ENCODE measurements at regions of chr11 and their contacts with region 1.

Region 1: GRCh38 chr11:43643898-43644620 is 36.5 kb upstream of the HSD17B12 start:
- DNase-seq: peak; percentile 93
- H3K4me3 Mint-ChIP-seq: peak overlapping the region; percentile 98
- H3K27ac Mint-ChIP-seq: peak overlapping the region; percentile 92
- H3K4me1 Mint-ChIP-seq: peaks cover 23% of the 10 kb centered on the region
- H3K27me3 Mint-ChIP-seq: peaks cover 12% of the 10 kb centered on the region

Region 2: GRCh38 chr11:43358801-43359421 is 285.1 kb before region 1 on chr11 and contains the start of gene TTC17:
- CTCF ChIA-PET with region 1: no interaction called
- intact Hi-C with region 1: loop called (anchors 1 kb)
- DNase-seq: peak; percentile 96
- H3K4me3 Mint-ChIP-seq: peak within 1 kb of the TSS; percentile 95
- H3K27ac Mint-ChIP-seq: peak within 1 kb of the TSS; percentile 94
- H3K4me1 Mint-ChIP-seq: peaks cover 37% of the 10 kb centered on the region
- H3K27me3 Mint-ChIP-seq: no peaks in the 10 kb centered on the region
- total RNA-seq, gene TTC17: 57.1 to 64.3 TPM

Region 3: GRCh38 chr11:43486141-43486540 is 157.9 kb before region 1 on chr11:
- CTCF ChIA-PET with region 1: no interaction called
- intact Hi-C with region 1: no loop called
- DNase-seq: no peak
- H3K4me3 Mint-ChIP-seq: no peak overlapping the region
- H3K27ac Mint-ChIP-seq: no peak overlapping the region
- H3K4me1 Mint-ChIP-seq: no peaks in the 10 kb centered on the region
- H3K27me3 Mint-ChIP-seq: no peaks in the 10 kb centered on the region

Region 4: GRCh38 chr11:43579171-43579918 is 64.7 kb before region 1 on chr11:
- CTCF ChIA-PET with region 1: no interaction called
- intact Hi-C with region 1: loop called (anchors 2 kb)
- DNase-seq: peak; percentile 58
- H3K4me3 Mint-ChIP-seq: peak overlapping the region; percentile 72
- H3K27ac Mint-ChIP-seq: no peak overlapping the region
- H3K4me1 Mint-ChIP-seq: peaks cover 54% of the 10 kb centered on the region
- H3K27me3 Mint-ChIP-seq: peaks cover 93% of the 10 kb centered on the region

Region 5: DNA sequence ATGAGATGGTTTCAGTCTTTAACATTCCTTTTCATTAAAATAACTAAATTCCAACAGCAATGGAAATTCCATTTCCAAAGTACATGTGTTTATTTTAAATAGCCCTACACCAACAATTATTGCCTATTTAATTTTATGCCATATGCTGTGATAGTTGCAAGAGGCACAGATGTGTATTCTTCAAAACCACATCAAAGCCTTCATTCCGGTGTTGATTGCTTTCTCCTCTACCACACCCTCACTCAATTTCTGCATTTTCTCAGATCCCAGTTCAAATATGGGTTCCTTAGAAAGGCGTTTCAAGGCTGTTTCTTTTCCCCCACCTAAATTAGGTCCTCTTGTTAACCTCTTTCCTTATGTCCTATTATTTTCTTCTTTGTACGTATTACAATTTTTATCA is 30.5 kb after region 1 on chr11:
- CTCF ChIA-PET with region 1: no interaction called
- intact Hi-C with region 1: no loop called
- DNase-seq: no peak
- H3K4me3 Mint-ChIP-seq: no peak overlapping the region
- H3K27ac Mint-ChIP-seq: no peak overlapping the region
- H3K4me1 Mint-ChIP-seq: no peaks in the 10 kb centered on the region
- H3K27me3 Mint-ChIP-seq: peaks cover 5% of the 10 kb centered on the region

Region 6: GRCh38 chr11:43830928-43831440 is 186.9 kb after region 1 on chr11:
- CTCF ChIA-PET with region 1: no interaction called
- intact Hi-C with region 1: loop called (anchors 1 kb)
- DNase-seq: peak; percentile 80
- H3K4me3 Mint-ChIP-seq: no peak overlapping the region
- H3K27ac Mint-ChIP-seq: peak overlapping the region; percentile 86
- H3K4me1 Mint-ChIP-seq: peaks cover 15% of the 10 kb centered on the region
- H3K27me3 Mint-ChIP-seq: no peaks in the 10 kb centered on the region

Region 7: DNA sequence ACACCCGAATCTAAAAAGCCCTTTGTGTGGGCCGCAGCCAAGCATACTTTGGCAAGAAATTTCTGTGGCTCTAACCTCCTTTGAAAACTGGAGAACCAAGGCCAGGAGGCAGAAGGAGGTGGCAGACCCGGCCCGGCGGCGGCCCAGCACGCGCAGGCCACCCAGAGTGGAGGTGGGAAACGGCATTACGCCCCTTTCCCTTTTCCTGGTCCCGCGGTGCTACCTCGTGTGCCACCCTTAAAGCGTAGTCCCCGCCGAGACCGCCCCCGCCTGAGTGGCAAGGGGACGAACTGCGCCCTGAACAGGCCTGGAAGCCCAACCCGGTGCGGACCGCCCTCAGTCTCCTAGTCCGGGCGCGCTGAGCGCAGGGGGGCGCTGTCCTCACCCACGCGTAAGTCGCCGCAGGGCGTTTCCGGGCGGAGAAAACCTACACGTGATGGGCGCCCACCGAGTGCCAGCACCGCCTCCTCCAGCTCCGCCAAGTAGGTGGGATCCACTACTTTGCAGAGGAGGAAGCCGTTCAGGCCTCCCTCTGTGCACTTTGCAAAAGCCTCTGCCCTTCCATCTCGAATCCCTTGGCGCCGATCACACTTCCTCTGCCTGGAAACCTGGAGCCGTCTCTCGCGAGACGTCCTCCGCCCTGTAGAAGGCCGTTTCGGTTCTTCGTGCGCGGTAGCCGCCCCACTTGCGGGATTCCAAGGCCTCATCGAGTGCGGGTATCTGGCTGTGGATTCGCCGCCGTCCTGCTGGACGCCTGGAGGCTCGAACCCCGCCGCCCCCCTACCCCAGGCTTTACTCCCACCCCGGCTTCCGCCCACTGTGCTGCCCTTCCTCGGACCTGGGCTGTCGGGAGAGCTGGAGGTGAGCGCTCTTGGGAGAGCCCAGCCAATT is 422.0 kb after region 1 on chr11 and contains the start of gene ACCS:
- CTCF ChIA-PET with region 1: no interaction called
- intact Hi-C with region 1: loop called (anchors 10 kb)
- DNase-seq: peak; percentile 92
- H3K4me3 Mint-ChIP-seq: peak within 1 kb of the TSS; percentile 88
- H3K27ac Mint-ChIP-seq: peak within 1 kb of the TSS; percentile 93
- H3K4me1 Mint-ChIP-seq: peaks cover 20% of the 10 kb centered on the region
- H3K27me3 Mint-ChIP-seq: no peaks in the 10 kb centered on the region
- total RNA-seq, gene ACCS: 16.2 to 16.6 TPM